Psoas muscle (tissue), 8 donors: ENCODE measurements at regions of chr13 and their contacts with region 1.

Region 1: DNA sequence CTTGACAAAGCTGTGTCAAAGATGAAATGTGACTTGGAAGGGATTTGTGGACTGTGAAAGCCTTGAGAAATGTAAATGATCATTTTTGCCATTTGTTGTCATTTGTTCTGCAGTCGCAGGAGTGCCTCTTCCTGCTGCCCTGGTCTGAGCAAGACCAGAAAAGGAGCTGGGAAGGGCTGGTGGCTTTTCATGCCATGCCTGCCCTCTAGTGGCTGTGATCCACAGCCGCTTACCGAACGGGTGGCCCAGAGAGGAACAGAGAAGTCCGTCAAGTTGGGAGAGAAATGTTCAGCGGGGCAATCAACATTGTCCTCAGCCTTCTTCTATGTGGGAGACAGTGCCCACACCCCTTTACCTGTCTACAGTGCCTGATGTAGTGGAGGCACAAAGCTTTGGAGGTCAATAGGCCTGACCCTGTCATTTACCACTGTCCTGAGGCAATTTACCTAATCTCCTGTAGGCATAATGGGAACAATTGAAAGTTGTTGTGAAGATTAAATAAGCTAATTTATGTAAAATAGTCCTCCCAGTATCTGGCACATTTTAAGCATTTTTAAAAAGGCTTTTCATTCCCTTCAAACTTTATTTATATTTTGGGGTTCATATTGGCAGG is 224.4 kb downstream of the B3GLCT start:
- DNase-seq: peak; percentile 71 to 85
- ATAC-seq: peak; percentile 94 to 97 (median 95)
- H3K4me3 ChIP-seq: no peak overlapping the region
- H3K27ac ChIP-seq: no peak overlapping the region
- H3K4me1 ChIP-seq: no peaks in the 10 kb centered on the region
- H3K27me3 ChIP-seq: peaks cover 0 to 3% (median 0%) of the 10 kb centered on the region in 3 donors
- CTCF ChIP-seq: peak; percentile 91

Region 2: DNA sequence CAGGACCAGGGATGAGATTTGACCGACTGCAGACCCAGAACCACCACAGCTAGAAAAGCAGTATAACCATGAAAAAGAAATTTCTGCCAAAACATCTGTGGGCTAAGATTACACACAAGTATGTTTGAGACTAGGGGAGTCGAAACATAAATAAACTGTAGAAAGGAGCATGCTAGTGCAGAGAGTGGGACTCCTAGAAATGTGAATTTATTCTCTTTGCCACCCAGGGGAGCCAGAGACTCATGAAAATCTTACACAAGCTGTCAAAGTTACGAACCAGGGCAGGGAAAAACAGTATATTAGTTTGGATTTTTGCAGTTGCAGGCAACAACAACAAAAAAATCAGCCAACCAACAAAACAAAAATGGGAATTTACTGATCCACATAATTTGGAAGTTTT is 250.2 kb before region 1 on chr13:
- intact Hi-C with region 1: loop called in 1 of 2 experiments (anchors 10 kb)
- DNase-seq: no peak
- ATAC-seq: no peak
- H3K4me3 ChIP-seq: no peak overlapping the region
- H3K27ac ChIP-seq: no peak overlapping the region
- H3K4me1 ChIP-seq: peaks cover 7% of the 10 kb centered on the region
- H3K27me3 ChIP-seq: no peaks in the 10 kb centered on the region
- CTCF ChIP-seq: no peak

Region 3: GRCh38 chr13:31485651-31486051 is 61.4 kb after region 1 on chr13:
- intact Hi-C with region 1: no loop called
- DNase-seq: no peak
- ATAC-seq: no peak
- H3K4me3 ChIP-seq: no peak overlapping the region
- H3K27ac ChIP-seq: no peak overlapping the region
- H3K4me1 ChIP-seq: no peaks in the 10 kb centered on the region
- H3K27me3 ChIP-seq: no peaks in the 10 kb centered on the region
- CTCF ChIP-seq: no peak